ENCODE measurements at regions of chr15 and their contacts with region 1.

Region 1: GRCh38 chr15:79661411-79661810 is 229.3 kb downstream of the MINAR1 start:
- DNase-seq: no peak
- ATAC-seq: no peak
- H3K4me3 ChIP-seq: no peak overlapping the region
- H3K27ac ChIP-seq: no peak overlapping the region
- H3K4me1 ChIP-seq: no peaks in the 10 kb centered on the region
- H3K27me3 ChIP-seq: peaks cover 0 to 6% (median 0%) of the 10 kb centered on the region in 3 donors
- CTCF ChIP-seq: no peak
- POLR2A ChIP-seq: no peak

Region 2: GRCh38 chr15:79296583-79296982 is 364.8 kb before region 1 on chr15:
- in situ Hi-C with region 1: no loop called
- intact Hi-C with region 1: no loop called
- DNase-seq: no peak
- ATAC-seq: no peak
- H3K4me3 ChIP-seq: no peak overlapping the region
- H3K27ac ChIP-seq: no peak overlapping the region
- H3K4me1 ChIP-seq: no peaks in the 10 kb centered on the region
- H3K27me3 ChIP-seq: peaks cover 0 to 3% (median 0%) of the 10 kb centered on the region in 3 donors
- CTCF ChIP-seq: no peak
- POLR2A ChIP-seq: no peak

Region 3: GRCh38 chr15:79673416-79674123 is 12.2 kb after region 1 on chr15:
- in situ Hi-C with region 1: no loop called
- intact Hi-C with region 1: loop called (anchors 1 kb)
- DNase-seq: no peak
- ATAC-seq: no peak
- H3K4me3 ChIP-seq: no peak overlapping the region
- H3K27ac ChIP-seq: no peak overlapping the region
- H3K4me1 ChIP-seq: no peaks in the 10 kb centered on the region
- H3K27me3 ChIP-seq: no peaks in the 10 kb centered on the region
- CTCF ChIP-seq: no peak
- POLR2A ChIP-seq: no peak

Region 4: DNA sequence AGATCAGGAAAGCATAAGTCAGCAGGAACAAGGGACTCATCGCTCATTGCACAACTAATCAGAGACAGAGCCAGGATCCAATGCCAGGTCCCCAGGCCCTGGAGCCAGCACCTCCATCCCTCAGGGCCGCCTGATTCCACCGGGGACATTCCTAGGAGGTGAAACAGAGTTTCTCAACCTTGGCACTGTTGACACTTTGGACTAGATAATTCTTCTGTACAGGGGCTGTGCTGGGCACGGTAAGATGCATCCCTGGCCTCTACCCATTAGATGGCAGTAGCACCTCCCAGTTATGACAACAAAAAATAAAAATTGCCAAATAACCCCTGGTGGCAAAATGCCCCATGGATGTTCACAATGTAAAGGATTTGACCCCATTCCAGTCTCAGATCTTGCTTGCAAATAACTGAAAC is 107.7 kb after region 1 on chr15:
- in situ Hi-C with region 1: no loop called
- intact Hi-C with region 1: no loop called
- DNase-seq: no peak
- ATAC-seq: peak; percentile 30 to 42
- H3K4me3 ChIP-seq: no peak overlapping the region
- H3K27ac ChIP-seq: no peak overlapping the region
- H3K4me1 ChIP-seq: no peaks in the 10 kb centered on the region
- H3K27me3 ChIP-seq: peaks cover 0 to 2% (median 0%) of the 10 kb centered on the region in 3 donors
- CTCF ChIP-seq: peak in 2 of 5 experiments; percentile 17 to 26
- POLR2A ChIP-seq: no peak